Activated CD4-positive, alpha-beta T cell treated with anti-CD3 and anti-CD28 coated beads, Interleukin-2, amount 10 ng/mL, durations not matched to agents 24 days and 14 days (primary cell): ENCODE measurements at regions of chr17 and their contacts with region 1.

Region 1: DNA sequence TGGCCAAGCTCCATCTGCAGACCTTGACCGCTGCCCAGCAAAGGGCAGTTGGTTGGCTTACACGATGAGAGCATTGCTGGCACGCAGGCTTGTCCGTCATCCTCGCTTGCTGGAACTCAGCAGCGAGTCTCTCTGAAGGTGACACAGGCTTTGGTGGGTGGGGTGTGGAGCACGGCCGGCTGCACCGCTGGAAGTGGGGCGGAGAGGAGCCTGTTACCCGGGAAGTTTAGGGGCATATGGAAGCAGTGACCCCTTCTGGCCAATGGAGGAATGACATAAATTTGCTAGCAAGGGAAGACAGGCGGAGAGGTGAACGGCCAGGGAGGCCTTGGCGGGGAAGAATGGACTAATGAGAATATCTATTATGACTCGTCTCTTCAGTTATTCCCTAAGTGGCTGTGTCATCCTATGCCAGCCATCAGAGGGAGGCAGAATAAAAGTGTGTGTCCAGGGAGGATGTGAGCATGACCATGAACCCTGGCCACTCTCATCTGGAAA is 65.9 kb upstream of the SDK2 start:
- DNase-seq: peak; percentile 91
- H3K4me3 Mint-ChIP-seq: no peak overlapping the region
- H3K27ac Mint-ChIP-seq: no peak overlapping the region
- H3K4me1 Mint-ChIP-seq: peaks cover 5% of the 10 kb centered on the region
- H3K27me3 Mint-ChIP-seq: peaks cover 10% of the 10 kb centered on the region

Region 2: GRCh38 chr17:73429440-73430164 is 280.5 kb before region 1 on chr17:
- intact Hi-C with region 1: loop called (anchors 1 kb)
- DNase-seq: peak; percentile 95
- H3K4me3 Mint-ChIP-seq: no peak overlapping the region
- H3K27ac Mint-ChIP-seq: no peak overlapping the region
- H3K4me1 Mint-ChIP-seq: peaks cover 10% of the 10 kb centered on the region
- H3K27me3 Mint-ChIP-seq: no peaks in the 10 kb centered on the region